Dendritic cell treated with granulocyte-macrophage colony-stimulating factor and Interleukin-4, amounts not matched to agents 40 ng/mL and 50 ng/mL, for 4 days (primary cell): ENCODE measurements at regions of chr5 and their contacts with region 1.

Region 1: GRCh38 chr5:85049020-85049419 is 664.3 kb upstream of the EDIL3 start:
- H3K4me3 Mint-ChIP-seq: no peak overlapping the region
- H3K27ac Mint-ChIP-seq: no peak overlapping the region
- H3K4me1 Mint-ChIP-seq: no peaks in the 10 kb centered on the region
- H3K27me3 Mint-ChIP-seq: no peaks in the 10 kb centered on the region

Region 2: GRCh38 chr5:83927140-83927733 is 1121.8 kb before region 1 on chr5:
- intact Hi-C with region 1: loop called (anchors 10 kb)
- H3K4me3 Mint-ChIP-seq: no peak overlapping the region
- H3K27ac Mint-ChIP-seq: no peak overlapping the region
- H3K4me1 Mint-ChIP-seq: no peaks in the 10 kb centered on the region
- H3K27me3 Mint-ChIP-seq: no peaks in the 10 kb centered on the region